CD4-positive, alpha-beta T cell (primary cell): ENCODE measurements at regions of chr3 and their contacts with region 1.

Region 1: GRCh38 chr3:33919312-33920120 is 121.1 kb downstream of the PDCD6IP start:
- DNase-seq: no peak
- ATAC-seq: no peak
- H3K4me3 ChIP-seq: no peak overlapping the region
- H3K4me3 Mint-ChIP-seq: no peak overlapping the region
- H3K27ac ChIP-seq: no peak overlapping the region
- H3K27ac Mint-ChIP-seq: no peak overlapping the region
- H3K4me1 ChIP-seq: no peaks in the 10 kb centered on the region
- H3K4me1 Mint-ChIP-seq: no peaks in the 10 kb centered on the region
- H3K27me3 ChIP-seq: no peaks in the 10 kb centered on the region
- H3K27me3 Mint-ChIP-seq: no peaks in the 10 kb centered on the region
- CTCF ChIP-seq: no peak

Region 2: GRCh38 chr3:32794487-32795308 is 1124.8 kb before region 1 on chr3:
- CTCF ChIA-PET with region 1: no interaction called
- POLR2A ChIA-PET with region 1: no interaction called
- intact Hi-C with region 1: loop called in 1 of 2 experiments (anchors 5 kb)
- DNase-seq: no peak
- ATAC-seq: no peak
- H3K4me3 ChIP-seq: no peak overlapping the region
- H3K4me3 Mint-ChIP-seq: no peak overlapping the region
- H3K27ac ChIP-seq: no peak overlapping the region
- H3K27ac Mint-ChIP-seq: no peak overlapping the region
- H3K4me1 ChIP-seq: no peaks in the 10 kb centered on the region
- H3K4me1 Mint-ChIP-seq: no peaks in the 10 kb centered on the region
- H3K27me3 ChIP-seq: no peaks in the 10 kb centered on the region
- H3K27me3 Mint-ChIP-seq: no peaks in the 10 kb centered on the region
- CTCF ChIP-seq: no peak